Left cardiac atrium (tissue), 4 donors: ENCODE measurements at regions of chr5 and their contacts with region 1.

Region 1: DNA sequence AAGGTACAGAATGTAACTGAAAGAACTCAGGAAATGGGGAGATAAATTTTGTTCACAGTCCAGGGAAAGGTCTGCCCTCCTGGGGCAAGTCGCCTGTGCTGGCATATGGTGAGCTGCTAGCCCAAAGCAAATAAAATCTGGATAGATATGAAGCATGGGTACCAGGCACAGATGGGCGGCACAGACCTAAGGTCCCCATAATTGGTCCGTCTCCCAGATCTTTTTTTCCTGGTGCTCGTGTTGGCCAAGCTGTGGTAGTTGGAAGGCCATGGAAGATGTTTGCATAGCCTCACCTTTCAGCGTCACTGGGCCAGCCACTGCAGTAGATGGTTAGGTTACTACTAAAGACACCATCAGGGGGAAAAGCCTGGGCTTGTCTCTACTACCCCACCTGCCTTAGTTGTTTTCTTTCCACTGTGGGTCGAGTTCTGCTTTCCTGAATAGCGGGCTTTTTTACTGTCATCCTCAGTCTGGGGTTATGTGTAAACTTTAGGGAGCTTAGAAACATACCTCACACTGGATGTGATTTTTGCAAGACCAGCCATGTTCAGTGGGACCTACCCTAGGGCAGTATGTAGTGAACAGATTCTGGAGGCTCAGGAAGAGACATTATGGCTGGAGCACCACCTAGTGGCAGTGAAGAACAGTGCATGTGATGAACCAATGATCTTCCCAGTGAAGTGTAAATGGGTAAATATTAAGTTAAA is 24.2 kb upstream of the GLRX start:
- DNase-seq: peak; percentile 61
- ATAC-seq: peak; percentile 76 to 77

Region 2: DNA sequence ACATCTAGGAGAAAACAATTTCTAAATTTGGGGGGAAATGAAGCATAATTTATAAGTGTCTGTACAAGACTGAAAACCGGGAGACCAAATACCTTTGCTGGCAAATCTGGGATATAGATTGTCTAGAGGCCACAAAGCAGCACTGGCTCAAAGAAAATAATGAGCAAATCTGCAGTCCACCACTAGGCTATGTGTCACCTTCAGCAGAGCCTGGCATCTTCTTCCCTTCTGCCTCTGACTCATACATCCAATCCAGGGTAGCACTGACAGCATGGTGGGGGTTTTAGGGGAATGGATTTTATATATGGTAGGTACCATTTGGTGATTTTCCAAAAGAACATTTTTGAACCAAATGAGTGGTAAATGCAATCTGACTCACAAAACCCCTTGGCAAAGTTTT is 442.7 kb before region 1 on chr5:
- intact Hi-C with region 1: no loop called
- DNase-seq: no peak
- ATAC-seq: no peak

Region 3: DNA sequence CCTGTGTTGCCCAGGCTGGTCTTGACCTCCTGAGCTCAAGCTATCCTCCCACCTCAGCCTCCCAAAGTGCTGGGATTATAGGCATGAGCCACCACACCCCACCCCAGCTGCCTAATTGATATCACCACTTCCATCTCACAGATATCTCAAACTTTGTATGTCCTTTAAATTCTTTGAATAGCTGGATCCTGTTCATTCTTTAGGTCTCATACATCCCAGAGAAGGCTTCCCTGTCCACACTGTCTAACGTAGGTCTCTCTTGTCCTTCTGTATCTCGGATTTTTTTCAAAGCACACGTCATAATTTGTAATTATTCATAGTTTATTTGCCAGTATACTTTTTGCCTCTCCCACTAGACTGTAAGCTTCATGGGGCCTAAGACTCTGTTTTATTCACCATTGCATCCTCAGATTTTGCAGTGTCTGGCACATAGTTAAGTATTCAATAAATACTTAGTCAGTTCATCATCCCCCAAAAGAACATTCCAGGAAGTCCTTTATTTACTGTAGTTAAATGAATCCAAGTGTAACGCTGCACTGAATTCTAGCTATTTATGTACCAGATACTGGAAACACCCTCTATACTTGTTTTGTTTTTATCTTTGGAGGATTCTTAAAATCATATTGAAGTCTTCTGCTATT is 281.3 kb before region 1 on chr5:
- intact Hi-C with region 1: no loop called
- DNase-seq: no peak
- ATAC-seq: no peak

Region 4: GRCh38 chr5:95646554-95647431 is 199.9 kb before region 1 on chr5 and contains the start of gene RFESD:
- intact Hi-C with region 1: loop called (anchors 2 to 10 kb)
- DNase-seq: peak; percentile 100
- ATAC-seq: peak; percentile 99
- total RNA-seq, gene RFESD: 2.5 to 4.3 TPM

Region 5: DNA sequence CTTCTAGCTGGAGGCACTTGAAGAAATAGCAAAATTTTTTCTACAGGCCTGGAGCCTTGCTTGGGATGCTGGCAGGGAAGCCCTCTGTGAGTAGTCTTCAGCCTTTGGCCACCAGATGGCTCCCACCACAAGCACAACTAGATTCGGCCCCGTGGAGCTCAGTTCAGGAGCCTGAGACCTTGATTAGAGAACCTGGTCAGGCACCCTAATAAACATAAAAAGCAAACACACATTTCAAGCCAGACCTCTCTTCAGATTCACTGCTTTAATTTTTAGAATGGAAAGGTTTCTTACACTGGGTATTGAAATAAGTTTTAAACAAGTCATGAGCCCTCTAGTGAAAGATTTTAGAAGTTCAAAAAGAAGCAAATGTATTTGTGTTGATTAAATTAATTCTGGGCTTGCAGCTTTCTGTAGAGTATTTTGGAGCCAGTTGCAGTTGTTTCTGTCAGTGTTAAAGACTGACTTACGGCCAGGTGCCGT is 65.6 kb before region 1 on chr5:
- intact Hi-C with region 1: loop called (anchors 1 to 2 kb)
- DNase-seq: peak; percentile 85
- ATAC-seq: peak; percentile 92 to 95